Activated naive CD4-positive, alpha-beta T cell treated with anti-CD3 and anti-CD28 coated beads for 36 hours (primary cell): ENCODE measurements at regions of chr17 and their contacts with region 1.

Region 1: DNA sequence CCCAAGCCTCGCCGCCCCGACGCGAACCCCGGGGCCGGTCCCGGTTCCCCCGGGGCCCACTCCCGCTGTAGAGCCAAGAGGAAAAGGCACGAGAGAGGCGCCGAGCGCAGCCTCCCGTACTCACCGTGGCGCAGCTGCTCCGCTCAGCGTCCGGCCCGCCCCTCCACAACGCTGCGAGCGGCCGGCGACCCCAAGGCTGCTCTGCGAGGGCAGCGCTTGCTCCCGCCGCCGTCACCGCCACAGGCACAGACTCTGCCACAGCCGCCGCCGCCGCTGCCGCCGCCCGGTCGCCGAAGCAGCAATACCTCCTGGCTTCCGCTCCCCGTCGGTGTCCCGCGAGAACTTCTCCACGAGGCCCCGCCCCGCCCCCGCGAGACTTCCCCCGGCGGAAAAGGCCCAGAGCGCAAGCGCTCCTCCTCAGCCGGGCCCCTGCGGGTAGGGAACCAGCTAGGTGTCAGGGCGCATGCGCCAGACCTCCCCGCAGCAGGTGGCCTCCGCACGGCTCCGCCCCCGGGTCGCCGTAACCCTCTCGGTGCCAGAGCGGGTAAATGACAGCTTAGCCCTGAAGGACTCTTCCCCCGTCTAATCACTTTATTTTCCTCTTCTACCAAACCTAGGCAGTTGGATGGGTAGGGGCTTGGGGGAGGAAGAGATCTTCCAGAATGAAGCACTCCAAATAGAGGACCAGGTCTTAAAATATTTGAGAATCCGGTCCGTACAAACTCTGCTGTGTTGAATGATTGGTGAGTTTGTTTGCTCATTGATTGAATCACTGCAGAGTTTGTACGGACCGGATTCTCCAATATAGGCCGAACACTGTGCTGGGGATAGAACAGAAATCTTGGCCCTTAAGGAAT is at the start of gene GRB2:
- DNase-seq: peak; percentile 100
- H3K4me3 Mint-ChIP-seq: peak within 1 kb of the TSS; percentile 97
- H3K27ac Mint-ChIP-seq: peak within 1 kb of the TSS; percentile 97
- H3K4me1 Mint-ChIP-seq: peaks cover 38% of the 10 kb centered on the region
- H3K27me3 Mint-ChIP-seq: no peaks in the 10 kb centered on the region
- total RNA-seq, gene GRB2: 166 to 169 TPM

Region 2: DNA sequence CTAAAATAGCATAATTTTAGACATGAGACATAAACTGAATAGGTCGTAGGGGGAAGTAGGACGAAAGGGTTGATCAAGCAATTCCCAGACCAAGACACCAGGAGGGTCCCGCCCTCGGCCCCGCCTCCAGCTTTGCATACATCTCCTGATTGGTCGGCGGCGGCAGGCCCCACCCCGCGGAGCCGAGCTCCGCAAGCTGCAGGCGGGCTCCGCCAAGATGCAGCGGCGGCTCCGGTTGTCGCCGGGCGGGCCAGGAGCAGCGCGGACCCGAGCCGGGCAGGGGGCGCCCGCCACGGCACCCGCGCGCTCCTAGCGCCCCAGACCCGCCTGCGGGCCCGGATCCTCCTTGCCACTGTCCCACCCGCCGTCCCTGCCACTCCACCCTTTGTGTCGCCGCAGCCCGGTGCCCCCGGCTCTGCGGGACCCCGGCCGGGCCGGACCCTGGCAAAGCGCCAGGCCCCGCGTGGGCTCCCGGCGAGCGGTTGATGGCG is 418.1 kb before region 1 on chr17 and contains the start of gene CDR2L:
- CTCF ChIA-PET with region 1: no interaction called
- intact Hi-C with region 1: loop called (anchors 10 kb)
- DNase-seq: peak; percentile 94
- H3K4me3 Mint-ChIP-seq: peak within 1 kb of the TSS; percentile 80
- H3K27ac Mint-ChIP-seq: no peak within 1 kb of the TSS
- H3K4me1 Mint-ChIP-seq: peaks cover 8% of the 10 kb centered on the region
- H3K27me3 Mint-ChIP-seq: peaks cover 9% of the 10 kb centered on the region
- total RNA-seq, gene CDR2L: 0.49 to 0.93 TPM

Region 3: GRCh38 chr17:75250009-75250471 is 155.6 kb before region 1 on chr17:
- CTCF ChIA-PET with region 1: no interaction called
- intact Hi-C with region 1: loop called (anchors 5 kb)
- DNase-seq: peak; percentile 90
- H3K4me3 Mint-ChIP-seq: peak overlapping the region; percentile 61
- H3K27ac Mint-ChIP-seq: peak overlapping the region; percentile 93
- H3K4me1 Mint-ChIP-seq: peaks cover 74% of the 10 kb centered on the region
- H3K27me3 Mint-ChIP-seq: no peaks in the 10 kb centered on the region

Region 4: DNA sequence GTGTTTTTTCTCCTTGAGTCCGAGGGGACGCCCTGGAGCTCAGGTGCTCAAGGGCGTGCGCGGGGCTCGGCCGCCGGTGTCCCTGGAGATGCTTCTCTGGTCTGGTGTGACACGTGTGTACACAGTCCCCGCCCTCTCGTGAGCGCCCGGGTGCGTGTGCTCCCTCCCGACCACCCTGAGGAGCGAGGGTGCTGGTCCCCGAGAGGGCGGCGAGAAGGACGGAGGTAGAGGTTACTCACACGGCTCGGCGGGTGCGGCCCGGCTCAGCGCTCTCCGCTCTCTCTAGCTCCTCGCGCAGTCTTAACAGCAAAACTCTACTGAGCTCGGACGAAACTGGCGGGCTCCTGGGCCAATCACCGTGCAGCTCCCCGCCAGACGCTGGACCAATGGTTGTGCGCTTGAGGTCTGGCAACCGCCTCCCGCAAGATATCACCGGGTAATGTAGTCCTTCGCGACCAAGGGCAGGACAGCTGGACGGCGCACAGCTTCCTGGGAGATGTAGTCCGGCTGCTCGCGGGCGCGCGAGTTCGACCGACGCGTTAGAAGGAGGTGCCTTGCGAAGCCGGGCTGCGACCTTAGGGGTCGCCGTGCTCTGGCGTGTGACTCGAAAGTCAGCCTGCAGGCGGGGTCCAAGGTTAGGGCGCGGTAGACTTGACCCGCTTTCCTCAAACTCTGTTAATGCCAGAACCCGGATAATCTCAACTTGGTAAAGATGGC is 116.3 kb before region 1 on chr17 and contains the start of gene SLC25A19:
- CTCF ChIA-PET with region 1: interaction called, 11 read pairs
- intact Hi-C with region 1: loop called (anchors 1 kb)
- DNase-seq: peak; percentile 99
- H3K4me3 Mint-ChIP-seq: peak within 1 kb of the TSS; percentile 99
- H3K27ac Mint-ChIP-seq: peak within 1 kb of the TSS; percentile 100
- H3K4me1 Mint-ChIP-seq: peaks cover 26% of the 10 kb centered on the region
- H3K27me3 Mint-ChIP-seq: no peaks in the 10 kb centered on the region
- total RNA-seq, gene SLC25A19: 47.5 to 48.4 TPM

Region 5: DNA sequence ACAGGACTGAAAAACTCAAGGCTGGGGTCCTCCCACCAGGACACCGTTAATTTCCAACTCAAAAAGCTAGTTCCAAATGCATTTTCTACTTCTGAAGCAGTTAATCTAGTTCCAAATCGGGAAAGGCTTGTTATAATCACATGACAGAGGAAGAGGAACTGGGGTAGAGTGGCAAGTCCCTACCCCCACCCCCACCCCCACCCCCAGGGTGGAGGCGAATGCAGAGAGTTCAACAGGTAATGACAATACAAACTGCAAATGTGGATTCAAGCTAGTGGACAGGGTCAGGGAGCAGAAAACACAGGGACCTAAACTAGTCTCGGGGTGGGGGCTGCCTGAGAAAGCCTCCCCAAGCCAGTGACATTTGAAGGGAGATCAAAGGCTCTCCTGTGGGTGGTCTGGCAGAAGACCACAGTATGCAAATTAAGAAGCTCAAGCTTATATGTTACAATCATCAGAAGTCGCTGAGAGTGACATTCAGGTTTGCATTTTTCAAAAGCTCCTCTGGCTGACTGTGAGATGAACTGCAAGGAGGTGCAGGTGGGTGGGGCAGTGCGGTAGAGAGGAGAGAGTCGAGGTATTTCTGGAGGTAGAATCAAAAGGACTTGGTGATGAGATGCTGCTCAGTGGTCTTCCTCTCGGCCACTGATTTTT is 60.0 kb before region 1 on chr17:
- CTCF ChIA-PET with region 1: no interaction called
- intact Hi-C with region 1: loop called (anchors 1 kb)
- DNase-seq: peak; percentile 62
- H3K4me3 Mint-ChIP-seq: peak overlapping the region; percentile 39
- H3K27ac Mint-ChIP-seq: peak overlapping the region; percentile 66
- H3K4me1 Mint-ChIP-seq: peaks cover 94% of the 10 kb centered on the region
- H3K27me3 Mint-ChIP-seq: no peaks in the 10 kb centered on the region

Region 6: GRCh38 chr17:75456417-75457046 is 50.9 kb after region 1 on chr17 and contains the start of gene TMEM94:
- CTCF ChIA-PET with region 1: no interaction called
- intact Hi-C with region 1: loop called (anchors 2 kb)
- DNase-seq: peak; percentile 96
- H3K4me3 Mint-ChIP-seq: peak within 1 kb of the TSS; percentile 83
- H3K27ac Mint-ChIP-seq: peak within 1 kb of the TSS; percentile 85
- H3K4me1 Mint-ChIP-seq: peaks cover 15% of the 10 kb centered on the region
- H3K27me3 Mint-ChIP-seq: no peaks in the 10 kb centered on the region
- total RNA-seq, gene TMEM94: 50.4 to 53.5 TPM